Activated B cell treated with CpG ODN at 0.5 μM for 24 hours (primary cell): ENCODE measurements at regions of chr10 and their contacts with region 1.

Region 1: DNA sequence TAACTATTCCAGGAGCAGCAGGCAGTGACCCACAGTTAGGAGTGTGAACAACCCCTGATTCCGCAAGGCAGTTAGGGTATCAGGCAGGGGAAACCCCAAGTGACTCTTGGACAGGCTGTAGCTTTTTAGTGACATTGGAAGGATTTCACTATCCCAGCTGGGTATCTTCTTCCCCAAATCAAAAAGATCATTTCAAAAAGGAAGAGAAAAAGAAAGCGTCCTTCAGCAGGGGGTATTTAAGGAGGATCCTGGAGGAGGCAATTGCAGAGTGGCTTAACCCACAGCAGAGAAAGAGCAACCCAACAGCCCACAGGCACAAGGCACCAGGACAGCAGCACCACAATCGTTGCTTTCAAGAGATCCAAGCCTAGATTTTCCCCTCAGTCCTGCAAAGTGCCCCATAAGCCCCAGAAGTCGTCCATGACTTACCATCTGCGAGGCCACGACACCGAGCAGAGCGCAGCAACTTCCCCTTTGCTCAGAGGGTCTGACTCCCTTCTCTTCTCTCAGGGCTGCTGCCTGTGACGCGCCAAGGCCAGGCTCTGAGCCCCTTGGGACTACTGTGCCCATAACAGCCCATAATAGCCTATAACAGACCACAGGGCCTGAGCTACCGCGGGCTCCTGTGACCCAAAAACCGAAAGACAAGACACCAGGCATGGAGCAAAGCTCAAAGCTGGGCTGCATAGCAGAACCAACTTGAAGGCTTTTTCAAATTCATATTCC is 19.8 kb downstream of the PIK3AP1 start:
- DNase-seq: peak; percentile 70
- ATAC-seq: peak; percentile 90
- H3K4me3 Mint-ChIP-seq: peak overlapping the region; percentile 94
- H3K27ac Mint-ChIP-seq: peak overlapping the region; percentile 97
- H3K4me1 Mint-ChIP-seq: peaks cover 89% of the 10 kb centered on the region
- H3K27me3 Mint-ChIP-seq: no peaks in the 10 kb centered on the region
- CTCF ChIP-seq: no peak

Region 2: DNA sequence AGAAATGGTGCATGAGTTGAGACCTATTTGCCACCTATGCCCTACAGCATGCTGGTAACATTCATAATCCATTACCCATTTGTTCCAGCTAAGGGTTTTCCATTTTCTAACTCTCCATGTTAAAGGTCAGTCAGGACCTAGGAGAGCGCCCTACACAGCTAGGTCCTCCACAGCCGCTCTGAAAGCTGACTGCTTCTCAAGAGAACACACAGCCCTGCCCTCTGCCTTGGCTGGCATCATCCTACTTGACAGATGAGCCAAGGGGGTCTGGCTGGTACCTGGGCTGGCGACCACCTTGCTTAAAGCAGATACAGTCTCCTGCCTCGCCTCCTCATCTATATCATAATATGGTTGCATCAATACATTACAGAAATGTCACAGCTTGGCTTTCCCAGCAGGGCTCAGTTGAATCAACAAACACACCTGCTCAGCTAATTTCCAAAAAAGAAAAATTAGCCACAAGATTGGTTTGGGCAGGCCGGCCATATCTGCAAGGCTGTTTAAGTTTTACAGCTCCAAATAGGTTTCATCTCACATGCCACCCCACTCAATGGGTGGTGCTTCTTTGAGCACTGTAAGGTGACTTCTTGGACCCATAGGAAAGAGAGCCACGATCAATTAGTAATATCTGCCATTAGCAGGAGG is 204.1 kb before region 1 on chr10:
- CTCF ChIA-PET with region 1: no interaction called
- POLR2A ChIA-PET with region 1: no interaction called
- intact Hi-C with region 1: no loop called
- DNase-seq: no peak
- ATAC-seq: no peak
- H3K4me3 Mint-ChIP-seq: no peak overlapping the region
- H3K27ac Mint-ChIP-seq: no peak overlapping the region
- H3K4me1 Mint-ChIP-seq: no peaks in the 10 kb centered on the region
- H3K27me3 Mint-ChIP-seq: peaks cover 11% of the 10 kb centered on the region
- CTCF ChIP-seq: no peak

Region 3: GRCh38 chr10:96570983-96571964 is 129.3 kb before region 1 on chr10:
- CTCF ChIA-PET with region 1: no interaction called
- POLR2A ChIA-PET with region 1: no interaction called
- intact Hi-C with region 1: no loop called
- DNase-seq: no peak
- ATAC-seq: no peak
- H3K4me3 Mint-ChIP-seq: no peak overlapping the region
- H3K27ac Mint-ChIP-seq: no peak overlapping the region
- H3K4me1 Mint-ChIP-seq: peaks cover 17% of the 10 kb centered on the region
- H3K27me3 Mint-ChIP-seq: no peaks in the 10 kb centered on the region
- CTCF ChIP-seq: no peak

Region 4: GRCh38 chr10:96642973-96643372 is 57.6 kb before region 1 on chr10:
- CTCF ChIA-PET with region 1: interaction called, 6 read pairs
- POLR2A ChIA-PET with region 1: interaction called, 16 read pairs
- intact Hi-C with region 1: loop called (anchors 1 kb)
- DNase-seq: peak; percentile 54
- ATAC-seq: no peak
- H3K4me3 Mint-ChIP-seq: no peak overlapping the region
- H3K27ac Mint-ChIP-seq: peak overlapping the region; percentile 56
- H3K4me1 Mint-ChIP-seq: peaks cover 58% of the 10 kb centered on the region
- H3K27me3 Mint-ChIP-seq: no peaks in the 10 kb centered on the region
- CTCF ChIP-seq: no peak

Region 5: DNA sequence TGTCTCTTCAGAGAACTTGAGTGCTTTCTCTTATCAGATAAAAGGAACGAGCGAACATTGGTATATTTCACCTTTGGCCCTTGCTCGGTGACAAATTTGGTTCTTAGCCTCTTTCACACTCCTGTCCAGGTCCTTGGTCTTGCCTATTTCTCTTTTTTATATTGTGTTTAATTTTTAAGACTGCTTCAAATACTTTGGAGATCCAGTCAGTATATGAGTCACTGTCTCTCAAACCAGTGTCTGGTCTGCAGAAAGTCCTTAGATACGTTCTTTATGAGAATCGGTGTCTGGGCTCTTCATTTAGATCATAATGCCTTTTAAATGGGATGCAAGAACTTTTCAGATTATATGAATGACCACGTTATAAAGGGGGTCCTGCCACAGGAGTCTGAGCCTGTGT is 35.2 kb before region 1 on chr10:
- CTCF ChIA-PET with region 1: interaction called, 6 read pairs
- POLR2A ChIA-PET with region 1: interaction called, 9 read pairs
- intact Hi-C with region 1: loop called (anchors 1 kb)
- DNase-seq: no peak
- ATAC-seq: no peak
- H3K4me3 Mint-ChIP-seq: no peak overlapping the region
- H3K27ac Mint-ChIP-seq: peak overlapping the region; percentile 57
- H3K4me1 Mint-ChIP-seq: peaks cover 80% of the 10 kb centered on the region
- H3K27me3 Mint-ChIP-seq: no peaks in the 10 kb centered on the region
- CTCF ChIP-seq: no peak

Region 6: GRCh38 chr10:96743988-96744585 is 43.5 kb after region 1 on chr10:
- CTCF ChIA-PET with region 1: no interaction called
- POLR2A ChIA-PET with region 1: interaction called, 4 read pairs
- intact Hi-C with region 1: loop called (anchors 1 kb)
- DNase-seq: no peak
- ATAC-seq: no peak
- H3K4me3 Mint-ChIP-seq: no peak overlapping the region
- H3K27ac Mint-ChIP-seq: peak overlapping the region; percentile 77
- H3K4me1 Mint-ChIP-seq: peaks cover 73% of the 10 kb centered on the region
- H3K27me3 Mint-ChIP-seq: no peaks in the 10 kb centered on the region
- CTCF ChIP-seq: no peak